ENCODE measurements at regions of chr9 and their contacts with region 1.

Region 1: DNA sequence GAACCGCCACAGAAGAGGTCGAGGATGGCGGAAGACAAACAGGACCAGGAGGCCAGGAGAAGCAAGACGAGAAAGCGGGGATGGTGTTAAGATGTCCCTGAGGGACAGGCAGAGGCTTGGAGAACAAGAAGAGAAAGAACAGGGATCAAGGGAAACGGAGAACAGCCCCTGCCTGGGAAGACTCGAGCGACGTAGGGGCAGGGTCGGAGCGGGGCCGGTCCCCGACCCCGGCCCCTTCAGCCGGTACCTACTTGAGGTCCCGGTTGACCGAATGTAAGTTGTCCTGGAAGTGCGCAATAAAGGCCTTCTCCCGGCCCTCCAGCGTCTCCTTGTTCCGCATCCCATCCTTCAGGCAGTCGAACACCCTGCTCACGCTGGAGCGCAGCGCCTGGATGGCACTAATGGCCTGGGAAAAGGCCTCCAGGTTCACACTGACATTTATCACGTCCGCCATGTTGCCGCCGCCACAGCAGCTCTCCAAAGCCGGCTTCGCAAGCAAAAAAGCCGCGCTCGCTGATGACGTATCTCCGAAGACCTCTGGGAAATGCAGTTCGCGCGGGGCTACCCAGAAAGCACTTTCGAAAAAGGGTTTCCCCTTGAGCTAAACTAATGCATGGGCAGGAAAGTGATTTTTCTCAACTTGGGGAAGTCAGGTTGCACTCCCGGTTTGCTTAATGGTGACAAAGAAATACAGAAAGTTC is at the start of gene MED27:
- DNase-seq: peak; percentile 97
- H3K4me3 Mint-ChIP-seq: peak within 1 kb of the TSS; percentile 91
- H3K27ac Mint-ChIP-seq: peak within 1 kb of the TSS; percentile 79
- H3K4me1 Mint-ChIP-seq: peaks cover 46% of the 10 kb centered on the region
- H3K27me3 Mint-ChIP-seq: no peaks in the 10 kb centered on the region
- total RNA-seq, gene MED27: 30.1 to 32.4 TPM

Region 2: DNA sequence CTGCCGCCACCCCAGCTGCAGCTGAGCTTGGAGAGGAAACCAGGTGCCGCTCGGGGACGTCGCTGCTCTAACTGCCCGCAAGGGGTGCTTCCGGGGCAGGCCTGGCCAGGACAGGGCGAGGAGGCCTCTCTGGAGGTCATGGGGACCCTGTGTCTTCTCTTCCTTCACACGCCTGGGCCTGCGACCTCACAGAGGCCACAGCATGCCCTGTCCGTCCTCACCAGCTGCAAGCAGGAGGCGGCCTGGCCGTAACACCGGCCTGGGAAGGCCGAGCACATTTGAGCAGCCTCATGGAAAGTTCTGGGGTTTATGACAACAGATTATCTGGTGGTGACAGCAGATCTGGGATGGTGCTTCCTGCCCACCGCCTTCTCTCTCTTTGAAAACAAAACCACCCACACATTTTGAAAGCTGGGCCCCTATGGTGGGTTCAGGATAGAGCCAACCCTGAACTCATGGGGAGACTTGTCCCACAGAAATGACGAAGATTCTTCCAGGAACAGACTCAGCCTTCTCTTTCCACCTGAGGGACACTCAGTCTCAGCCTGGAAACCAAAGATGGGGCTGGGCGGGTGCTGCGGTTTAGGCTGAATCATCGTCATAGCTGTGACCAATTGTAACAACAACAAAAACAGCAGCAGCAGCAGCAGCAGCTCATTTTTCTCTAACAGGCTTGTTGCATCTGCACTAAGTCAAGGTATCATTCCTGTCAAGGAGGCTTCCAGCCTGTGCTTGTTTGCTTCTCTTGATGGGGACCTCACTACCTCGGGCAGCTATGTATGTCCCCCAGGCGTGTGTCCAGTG is 240.1 kb before region 1 on chr9:
- CTCF ChIA-PET with region 1: no interaction called
- POLR2A ChIA-PET with region 1: no interaction called
- intact Hi-C with region 1: loop called (anchors 1 kb)
- DNase-seq: peak; percentile 86
- H3K4me3 Mint-ChIP-seq: no peak overlapping the region
- H3K27ac Mint-ChIP-seq: peak overlapping the region; percentile 88
- H3K4me1 Mint-ChIP-seq: peaks cover 21% of the 10 kb centered on the region
- H3K27me3 Mint-ChIP-seq: peaks cover 30% of the 10 kb centered on the region

Region 3: GRCh38 chr9:132006677-132007370 is 72.7 kb before region 1 on chr9:
- CTCF ChIA-PET with region 1: no interaction called
- POLR2A ChIA-PET with region 1: interaction called, 5 read pairs
- intact Hi-C with region 1: loop called (anchors 1 kb)
- DNase-seq: peak; percentile 70
- H3K4me3 Mint-ChIP-seq: no peak overlapping the region
- H3K27ac Mint-ChIP-seq: peak overlapping the region; percentile 2
- H3K4me1 Mint-ChIP-seq: peaks cover 58% of the 10 kb centered on the region
- H3K27me3 Mint-ChIP-seq: no peaks in the 10 kb centered on the region

Region 4: DNA sequence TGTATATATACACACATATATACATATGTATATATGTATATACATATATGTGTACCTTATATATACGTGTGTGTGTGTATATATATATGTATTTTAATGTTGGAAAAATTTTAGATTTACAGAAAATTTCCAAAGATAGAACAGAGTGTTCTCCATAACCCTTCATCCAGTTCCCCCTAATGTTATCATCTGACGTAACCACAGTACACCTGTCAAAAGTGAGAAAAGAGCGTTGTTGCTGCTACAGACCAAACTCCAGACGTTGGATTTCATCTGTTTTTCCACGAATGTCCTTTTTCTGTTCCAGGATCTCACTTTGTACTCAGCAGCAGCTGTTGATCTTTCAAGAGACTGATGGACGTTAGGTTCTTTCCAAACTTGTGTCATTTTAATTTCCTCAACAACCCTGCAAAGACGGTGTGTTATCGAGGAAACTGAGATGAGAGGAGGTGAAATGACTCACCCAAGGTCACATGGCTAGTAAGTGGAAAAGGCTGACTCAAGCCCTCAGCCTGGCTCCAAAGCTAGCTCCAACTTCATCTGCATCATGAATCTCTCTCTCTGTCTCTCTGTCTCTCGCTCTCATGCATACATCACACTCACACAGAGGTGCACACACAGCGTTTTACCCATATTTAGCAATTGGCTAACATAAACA is 65.3 kb after region 1 on chr9:
- CTCF ChIA-PET with region 1: no interaction called
- POLR2A ChIA-PET with region 1: no interaction called
- intact Hi-C with region 1: loop called (anchors 5 kb)
- DNase-seq: peak; percentile 65
- H3K4me3 Mint-ChIP-seq: no peak overlapping the region
- H3K27ac Mint-ChIP-seq: peak overlapping the region; percentile 73
- H3K4me1 Mint-ChIP-seq: peaks cover 18% of the 10 kb centered on the region
- H3K27me3 Mint-ChIP-seq: peaks cover 67% of the 10 kb centered on the region

Region 5: GRCh38 chr9:132160802-132161742 is 81.5 kb after region 1 on chr9:
- CTCF ChIA-PET with region 1: no interaction called
- POLR2A ChIA-PET with region 1: no interaction called
- intact Hi-C with region 1: loop called (anchors 5 kb)
- DNase-seq: peak; percentile 72
- H3K4me3 Mint-ChIP-seq: peak overlapping the region; percentile 82
- H3K27ac Mint-ChIP-seq: no peak overlapping the region
- H3K4me1 Mint-ChIP-seq: peaks cover 8% of the 10 kb centered on the region
- H3K27me3 Mint-ChIP-seq: peaks cover 41% of the 10 kb centered on the region